Activated CD4-positive, alpha-beta memory T cell treated with anti-CD3 and anti-CD28 coated beads for 36 hours (primary cell): ENCODE measurements at regions of chr12 and their contacts with region 1.

Region 1: DNA sequence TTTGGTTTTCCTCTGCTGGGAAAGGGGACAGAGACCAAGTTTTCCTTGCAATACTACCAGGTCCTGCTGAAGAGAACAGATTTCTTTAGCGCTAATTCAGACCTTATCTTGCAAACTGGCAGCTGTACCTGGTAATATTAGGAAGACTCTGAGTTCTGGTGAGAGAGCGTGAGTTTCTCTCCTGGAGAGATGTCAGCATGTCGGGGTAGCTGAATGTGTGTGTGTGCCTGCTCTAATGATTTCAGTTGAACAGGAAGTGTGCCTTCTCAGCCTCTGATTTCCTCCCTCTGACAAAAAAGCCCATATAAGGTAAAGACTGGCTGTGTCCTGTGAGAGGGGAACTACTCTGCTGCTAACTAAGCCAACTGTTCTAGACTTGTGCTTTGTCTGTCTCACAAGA is 10.3 kb upstream of the ERP27 start:
- DNase-seq: peak; percentile 69
- H3K4me3 Mint-ChIP-seq: peak overlapping the region; percentile 80
- H3K27ac Mint-ChIP-seq: peak overlapping the region; percentile 99
- H3K4me1 Mint-ChIP-seq: peaks cover 82% of the 10 kb centered on the region
- H3K27me3 Mint-ChIP-seq: no peaks in the 10 kb centered on the region

Region 2: GRCh38 chr12:14803011-14803829 is 145.5 kb before region 1 on chr12 and contains the starts of genes C12orf60 and WBP11:
- CTCF ChIA-PET with region 1: no interaction called
- POLR2A ChIA-PET with region 1: interaction called, 5 read pairs
- intact Hi-C with region 1: loop called (anchors 1 kb)
- DNase-seq: peak; percentile 93
- H3K4me3 Mint-ChIP-seq: no peak within 1 kb of the TSS
- H3K27ac Mint-ChIP-seq: no peak within 1 kb of the TSS
- H3K4me1 Mint-ChIP-seq: peaks cover 35% of the 10 kb centered on the region
- H3K27me3 Mint-ChIP-seq: no peaks in the 10 kb centered on the region
- total RNA-seq, gene C12orf60: 3.3 to 3.4 TPM
- total RNA-seq, gene WBP11: 131 to 134 TPM

Region 3: GRCh38 chr12:14910090-14910915 is 38.4 kb before region 1 on chr12:
- CTCF ChIA-PET with region 1: no interaction called
- POLR2A ChIA-PET with region 1: interaction called, 6 read pairs
- intact Hi-C with region 1: loop called (anchors 1 kb)
- DNase-seq: peak; percentile 67
- H3K4me3 Mint-ChIP-seq: peak overlapping the region; percentile 28
- H3K27ac Mint-ChIP-seq: peak overlapping the region; percentile 90
- H3K4me1 Mint-ChIP-seq: peaks cover 37% of the 10 kb centered on the region
- H3K27me3 Mint-ChIP-seq: no peaks in the 10 kb centered on the region

Region 4: DNA sequence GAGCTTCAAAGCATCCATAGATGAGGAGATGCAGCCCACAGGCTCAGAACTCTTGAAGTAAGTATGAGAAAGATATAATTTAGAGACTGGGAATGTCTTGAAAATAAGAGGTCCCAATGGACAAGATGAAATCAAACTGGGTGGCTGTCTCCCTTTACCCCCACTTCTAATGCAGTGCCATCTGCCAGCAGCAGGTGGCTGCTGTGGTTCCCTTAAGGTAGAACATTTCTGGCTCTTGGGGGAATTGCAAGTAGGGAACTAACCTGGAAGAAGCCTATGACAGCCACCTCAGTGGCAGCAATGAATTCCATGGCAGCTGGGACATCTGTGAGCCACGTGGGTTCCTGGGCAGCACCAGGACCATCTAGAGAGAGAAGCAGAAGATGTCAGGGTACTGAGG is 11.0 kb before region 1 on chr12:
- CTCF ChIA-PET with region 1: interaction called, 21 read pairs
- POLR2A ChIA-PET with region 1: interaction called, 14 read pairs
- intact Hi-C with region 1: loop called (anchors 1 kb)
- DNase-seq: peak; percentile 33
- H3K4me3 Mint-ChIP-seq: no peak overlapping the region
- H3K27ac Mint-ChIP-seq: peak overlapping the region; percentile 50
- H3K4me1 Mint-ChIP-seq: peaks cover 38% of the 10 kb centered on the region
- H3K27me3 Mint-ChIP-seq: no peaks in the 10 kb centered on the region

Region 5: GRCh38 chr12:14981049-14981448 is 32.4 kb after region 1 on chr12:
- CTCF ChIA-PET with region 1: no interaction called
- POLR2A ChIA-PET with region 1: no interaction called
- intact Hi-C with region 1: loop called (anchors 5 kb)
- DNase-seq: no peak
- H3K4me3 Mint-ChIP-seq: no peak overlapping the region
- H3K27ac Mint-ChIP-seq: no peak overlapping the region
- H3K4me1 Mint-ChIP-seq: peaks cover 45% of the 10 kb centered on the region
- H3K27me3 Mint-ChIP-seq: no peaks in the 10 kb centered on the region

Region 6: DNA sequence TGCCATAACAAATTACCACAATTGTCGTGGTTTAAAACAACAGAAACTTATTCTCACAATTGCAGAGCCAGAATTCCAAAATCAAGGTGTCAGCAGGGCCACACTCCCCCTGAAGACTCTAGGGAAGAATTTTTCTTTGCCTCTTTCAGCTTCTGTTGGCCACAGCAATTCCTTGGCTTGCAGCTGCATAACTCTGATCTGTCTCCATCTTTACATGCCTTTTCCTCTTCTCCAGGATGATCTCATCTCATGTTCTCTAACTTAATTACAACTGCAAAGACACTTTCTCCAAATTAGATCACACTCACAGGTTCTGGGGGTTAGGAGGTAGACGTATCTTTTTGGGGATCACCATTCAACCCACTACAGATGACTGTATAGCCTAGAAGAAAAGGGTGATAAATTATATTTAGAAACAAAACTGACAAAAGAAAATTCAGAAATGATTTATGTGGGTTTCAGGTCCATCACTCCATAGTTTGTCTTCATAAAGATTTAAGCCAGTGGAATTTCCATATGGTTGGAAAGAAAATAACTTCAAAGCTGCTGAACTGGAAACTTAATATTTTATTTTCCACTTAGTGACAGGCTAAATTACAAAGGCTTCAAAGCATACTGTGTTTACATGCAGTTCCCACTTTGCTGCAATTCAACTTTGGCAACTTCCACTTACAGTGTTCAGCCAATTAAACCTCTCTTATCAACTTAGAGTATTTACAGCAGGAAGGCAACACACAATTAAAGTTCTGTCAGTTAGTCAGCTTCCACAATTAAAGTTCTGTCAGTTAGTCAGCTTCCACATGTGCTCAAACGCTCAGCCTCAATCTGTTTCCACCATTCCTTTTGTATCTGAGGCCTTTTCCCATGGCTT is 627.2 kb after region 1 on chr12:
- CTCF ChIA-PET with region 1: no interaction called
- POLR2A ChIA-PET with region 1: no interaction called
- intact Hi-C with region 1: loop called (anchors 1 kb)
- DNase-seq: no peak
- H3K4me3 Mint-ChIP-seq: no peak overlapping the region
- H3K27ac Mint-ChIP-seq: peak overlapping the region; percentile 7
- H3K4me1 Mint-ChIP-seq: peaks cover 39% of the 10 kb centered on the region
- H3K27me3 Mint-ChIP-seq: no peaks in the 10 kb centered on the region

Region 7: DNA sequence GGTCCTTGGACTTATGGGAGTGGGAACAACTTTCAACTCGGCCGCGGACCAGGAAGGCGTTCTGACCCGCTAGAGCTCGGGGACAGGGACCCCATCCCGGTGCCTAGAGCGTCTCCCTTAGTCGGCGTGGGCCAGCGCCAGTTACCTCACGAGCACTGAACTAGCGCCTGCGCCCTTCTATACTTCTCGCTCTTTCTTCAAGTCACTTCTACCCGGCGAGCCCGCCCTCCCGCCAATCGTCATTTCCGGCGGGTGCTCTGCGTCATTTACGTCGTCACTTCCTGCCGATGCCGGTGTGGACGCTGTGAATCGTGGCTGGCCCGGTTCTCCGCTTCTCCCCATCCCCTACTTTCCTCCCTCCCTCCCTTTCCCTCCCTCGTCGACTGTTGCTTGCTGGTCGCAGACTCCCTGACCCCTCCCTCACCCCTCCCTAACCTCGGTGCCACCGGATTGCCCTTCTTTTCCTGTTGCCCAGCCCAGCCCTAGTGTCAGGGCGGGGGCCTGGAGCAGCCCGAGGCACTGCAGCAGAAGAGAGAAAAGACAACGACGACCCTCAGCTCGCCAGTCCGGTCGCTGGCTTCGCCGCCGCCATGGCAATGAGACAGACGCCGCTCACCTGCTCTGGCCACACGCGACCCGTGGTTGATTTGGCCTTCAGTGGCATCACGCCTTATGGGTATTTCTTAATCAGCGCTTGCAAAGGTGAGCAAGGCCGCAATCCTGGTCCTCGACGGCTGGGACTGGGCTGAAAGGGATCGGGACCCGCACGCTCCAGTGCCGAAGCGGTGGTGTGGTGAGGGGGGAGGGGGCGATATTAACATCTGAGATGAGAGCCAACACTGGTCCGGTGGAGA is 933.7 kb after region 1 on chr12 and contains the start of gene STRAP:
- CTCF ChIA-PET with region 1: no interaction called
- POLR2A ChIA-PET with region 1: no interaction called
- intact Hi-C with region 1: loop called (anchors 10 kb)
- DNase-seq: peak; percentile 98
- H3K4me3 Mint-ChIP-seq: peak within 1 kb of the TSS; percentile 96
- H3K27ac Mint-ChIP-seq: peak within 1 kb of the TSS; percentile 94
- H3K4me1 Mint-ChIP-seq: peaks cover 48% of the 10 kb centered on the region
- H3K27me3 Mint-ChIP-seq: no peaks in the 10 kb centered on the region
- total RNA-seq, gene STRAP: 135 to 140 TPM